ENCODE measurements at regions of chr4 and their contacts with region 1.

Region 1: GRCh38 chr4:20684852-20685763 is 15.2 kb upstream of the PACRGL start:
- DNase-seq: no peak
- H3K4me3 ChIP-seq: no peak overlapping the region
- H3K27ac ChIP-seq: no peak overlapping the region
- H3K4me1 ChIP-seq: peaks cover 0 to 15% (median 9%) of the 10 kb centered on the region in 4 donors
- H3K27me3 ChIP-seq: no peaks in the 10 kb centered on the region
- CTCF ChIP-seq: peak in 3 of 4 experiments; percentile 39 to 65 (median 42)
- EP300 ChIP-seq: no peak
- POLR2A ChIP-seq: no peak

Region 2: DNA sequence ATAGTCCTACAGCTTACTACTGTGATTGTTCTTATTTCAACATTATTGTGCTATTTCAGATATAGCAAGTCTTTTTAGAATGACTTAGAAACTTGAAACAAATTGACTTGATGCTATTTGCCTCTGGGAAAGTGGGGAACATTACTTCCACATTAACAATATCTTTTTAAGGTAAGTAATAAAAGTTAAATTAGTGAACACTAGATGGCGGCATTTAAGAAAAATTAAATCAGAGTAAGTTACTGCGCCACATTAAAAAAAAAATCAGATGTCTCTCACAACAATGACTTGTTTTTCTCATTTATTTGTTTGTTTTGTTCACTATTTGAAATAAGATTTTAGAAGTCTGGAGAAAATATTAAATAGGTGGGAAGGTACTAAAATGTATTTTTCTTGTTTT is 1460.3 kb before region 1 on chr4:
- intact Hi-C with region 1: loop called (anchors 5 kb)
- DNase-seq: no peak
- H3K4me3 ChIP-seq: no peak overlapping the region
- H3K27ac ChIP-seq: no peak overlapping the region
- H3K4me1 ChIP-seq: no peaks in the 10 kb centered on the region
- H3K27me3 ChIP-seq: no peaks in the 10 kb centered on the region
- CTCF ChIP-seq: peak in 1 of 4 experiments; percentile 45
- EP300 ChIP-seq: no peak
- POLR2A ChIP-seq: no peak

Region 3: DNA sequence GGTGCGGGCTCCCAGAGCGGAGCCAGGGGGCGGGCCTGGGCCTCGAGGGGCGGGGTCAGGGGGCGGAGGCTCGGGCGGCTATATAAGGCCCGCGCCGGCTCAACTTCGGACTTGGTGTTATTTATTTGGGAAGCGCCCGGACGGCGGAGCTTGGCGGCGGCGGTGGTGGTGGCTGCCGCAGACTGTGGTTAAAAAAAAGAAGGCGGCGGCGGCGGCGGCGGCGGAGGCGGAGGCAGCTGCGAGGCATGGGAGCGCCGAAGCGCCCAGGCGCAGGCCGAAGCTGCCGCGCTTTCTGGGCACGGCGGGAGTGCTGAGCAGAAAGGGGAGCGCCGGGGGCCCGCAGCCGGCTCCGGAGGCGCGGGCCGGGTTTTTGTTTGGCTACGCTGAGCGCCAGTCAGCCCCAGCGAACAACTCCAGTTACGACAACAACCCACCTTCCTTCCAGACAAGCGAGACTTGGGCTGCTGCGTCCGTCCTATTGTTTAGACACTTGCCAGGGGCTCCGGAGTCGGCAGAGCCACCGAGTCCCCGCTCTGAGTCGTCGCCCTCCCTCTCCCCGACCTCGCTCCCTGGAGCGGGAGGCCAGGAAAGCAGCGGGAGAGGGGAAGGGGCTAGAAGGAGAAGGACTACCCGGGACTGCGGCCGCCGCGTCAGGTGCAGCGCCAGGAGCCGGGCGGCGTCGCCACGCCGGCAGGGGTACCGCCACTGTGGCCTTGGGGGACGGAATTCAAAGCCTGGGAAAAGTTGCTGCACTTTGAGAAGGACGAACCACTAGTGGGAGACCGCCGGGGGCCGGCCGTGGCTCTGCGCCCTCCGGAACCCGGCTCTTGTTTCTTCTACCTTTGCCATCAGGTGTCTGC is 433.1 kb before region 1 on chr4 and contains the start of gene SLIT2:
- intact Hi-C with region 1: loop called (anchors 10 kb)
- DNase-seq: peak; percentile 95
- H3K4me3 ChIP-seq: peak within 1 kb of the TSS; percentile 54 to 74 (median 72)
- H3K27ac ChIP-seq: peak within 1 kb of the TSS; percentile 68 to 84 (median 79)
- H3K4me1 ChIP-seq: peaks cover 0 to 45% (median 26%) of the 10 kb centered on the region in 4 donors
- H3K27me3 ChIP-seq: peaks cover 0 to 40% (median 5%) of the 10 kb centered on the region in 3 donors
- CTCF ChIP-seq: no peak
- EP300 ChIP-seq: no peak
- POLR2A ChIP-seq: peak; percentile 60 to 67
- total RNA-seq, gene SLIT2: 27.0 to 49.0 (median 34.9) TPM

Region 4: GRCh38 chr4:20422398-20422797 is 262.7 kb before region 1 on chr4:
- intact Hi-C with region 1: loop called (anchors 5 kb)
- DNase-seq: peak; percentile 67
- H3K4me3 ChIP-seq: no peak overlapping the region
- H3K27ac ChIP-seq: no peak overlapping the region
- H3K4me1 ChIP-seq: peaks cover 0 to 29% (median 4%) of the 10 kb centered on the region in 4 donors
- H3K27me3 ChIP-seq: no peaks in the 10 kb centered on the region
- CTCF ChIP-seq: peak; percentile 26 to 69 (median 61)
- EP300 ChIP-seq: no peak
- POLR2A ChIP-seq: no peak

Region 5: DNA sequence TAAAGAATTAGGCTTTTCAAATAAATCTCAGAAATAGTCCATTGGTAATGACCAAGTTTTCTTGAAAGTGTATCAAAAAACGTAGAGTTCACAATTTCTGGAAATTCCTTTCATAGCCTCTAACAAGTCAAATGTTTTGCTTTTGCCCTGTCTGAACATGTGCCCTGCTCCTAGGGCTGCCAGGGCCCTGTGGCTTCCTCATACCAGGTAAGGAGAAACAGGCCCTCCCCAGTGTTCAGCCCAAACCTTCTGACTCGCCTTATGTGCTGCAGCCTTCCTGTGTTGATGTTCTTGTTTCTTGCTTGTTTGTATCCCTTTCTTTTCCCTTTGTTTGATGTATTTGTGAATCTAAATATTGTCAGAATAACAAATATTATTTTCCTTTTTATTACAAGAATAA is 131.0 kb before region 1 on chr4:
- intact Hi-C with region 1: loop called (anchors 10 kb)
- DNase-seq: no peak
- H3K4me3 ChIP-seq: no peak overlapping the region
- H3K27ac ChIP-seq: no peak overlapping the region
- H3K4me1 ChIP-seq: no peaks in the 10 kb centered on the region
- H3K27me3 ChIP-seq: no peaks in the 10 kb centered on the region
- CTCF ChIP-seq: no peak
- EP300 ChIP-seq: no peak
- POLR2A ChIP-seq: no peak

Region 6: GRCh38 chr4:20572976-20573375 is 112.1 kb before region 1 on chr4:
- intact Hi-C with region 1: no loop called
- DNase-seq: no peak
- H3K4me3 ChIP-seq: no peak overlapping the region
- H3K27ac ChIP-seq: no peak overlapping the region
- H3K4me1 ChIP-seq: no peaks in the 10 kb centered on the region
- H3K27me3 ChIP-seq: no peaks in the 10 kb centered on the region
- CTCF ChIP-seq: no peak
- EP300 ChIP-seq: no peak
- POLR2A ChIP-seq: no peak

Region 7: GRCh38 chr4:20787940-20788665 is 103.0 kb after region 1 on chr4:
- intact Hi-C with region 1: no loop called
- DNase-seq: no peak
- H3K4me3 ChIP-seq: no peak overlapping the region
- H3K27ac ChIP-seq: peak overlapping the region in 3 of 4 donors; percentile 1 to 49 (median 25)
- H3K4me1 ChIP-seq: peaks cover 0 to 43% (median 17%) of the 10 kb centered on the region in 4 donors
- H3K27me3 ChIP-seq: no peaks in the 10 kb centered on the region
- CTCF ChIP-seq: no peak
- EP300 ChIP-seq: no peak
- POLR2A ChIP-seq: no peak

Region 8: DNA sequence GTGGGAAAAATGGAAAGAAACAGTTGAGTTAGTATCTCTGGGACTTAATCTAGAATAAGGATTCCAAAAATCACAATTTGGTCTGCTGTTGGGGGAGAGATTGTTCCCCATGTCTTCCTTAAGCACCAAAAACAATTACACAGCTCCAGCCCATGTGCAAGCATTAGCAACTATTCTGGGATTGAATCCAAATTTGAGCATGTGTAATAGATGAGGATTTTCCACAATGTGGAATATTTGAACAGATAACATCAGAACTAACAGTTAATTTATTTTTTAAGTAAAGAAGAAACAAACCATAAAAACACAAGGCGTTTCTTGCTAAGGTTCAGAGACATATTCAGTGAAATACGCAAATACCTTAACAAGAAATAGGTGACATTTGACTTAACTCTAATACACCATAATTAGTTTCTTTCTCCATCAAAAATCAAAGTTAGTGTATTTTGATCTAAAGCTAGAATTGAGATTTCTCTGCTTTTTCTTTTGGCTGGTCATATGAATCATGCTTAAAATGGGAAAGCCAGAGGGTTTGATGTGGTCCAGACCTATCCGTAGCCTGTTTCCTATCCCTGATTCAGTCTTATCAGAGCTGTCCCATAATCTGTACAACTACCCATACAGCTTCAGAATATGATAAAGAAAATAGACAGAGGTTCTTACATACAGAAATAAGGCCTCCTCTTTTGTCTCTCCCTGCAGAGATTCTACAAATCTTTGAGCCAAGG is 428.6 kb after region 1 on chr4:
- intact Hi-C with region 1: no loop called
- DNase-seq: no peak
- H3K4me3 ChIP-seq: no peak overlapping the region
- H3K27ac ChIP-seq: peak overlapping the region in 3 of 4 donors; percentile 14 to 37 (median 32)
- H3K4me1 ChIP-seq: peaks cover 0 to 40% (median 22%) of the 10 kb centered on the region in 4 donors
- H3K27me3 ChIP-seq: no peaks in the 10 kb centered on the region
- CTCF ChIP-seq: no peak
- EP300 ChIP-seq: no peak
- POLR2A ChIP-seq: no peak

Measured in sigmoid colon (tissue), 7 donors.